Activated T-helper 1 cell treated with anti-CD3 and anti-CD28 coated beads, Interleukin-12 subunit alpha, Interleukin-12 subunit beta, Interleukin-2, Interleukin-4 antibody, amounts not matched to agents 30 ng/mL and 10 ng/mL and 1 ng/mL, durations not matched to agents 14 hours and 24 hours and 36 hours (primary cell): ENCODE measurements at regions of chr14 and their contacts with region 1.

Region 1: DNA sequence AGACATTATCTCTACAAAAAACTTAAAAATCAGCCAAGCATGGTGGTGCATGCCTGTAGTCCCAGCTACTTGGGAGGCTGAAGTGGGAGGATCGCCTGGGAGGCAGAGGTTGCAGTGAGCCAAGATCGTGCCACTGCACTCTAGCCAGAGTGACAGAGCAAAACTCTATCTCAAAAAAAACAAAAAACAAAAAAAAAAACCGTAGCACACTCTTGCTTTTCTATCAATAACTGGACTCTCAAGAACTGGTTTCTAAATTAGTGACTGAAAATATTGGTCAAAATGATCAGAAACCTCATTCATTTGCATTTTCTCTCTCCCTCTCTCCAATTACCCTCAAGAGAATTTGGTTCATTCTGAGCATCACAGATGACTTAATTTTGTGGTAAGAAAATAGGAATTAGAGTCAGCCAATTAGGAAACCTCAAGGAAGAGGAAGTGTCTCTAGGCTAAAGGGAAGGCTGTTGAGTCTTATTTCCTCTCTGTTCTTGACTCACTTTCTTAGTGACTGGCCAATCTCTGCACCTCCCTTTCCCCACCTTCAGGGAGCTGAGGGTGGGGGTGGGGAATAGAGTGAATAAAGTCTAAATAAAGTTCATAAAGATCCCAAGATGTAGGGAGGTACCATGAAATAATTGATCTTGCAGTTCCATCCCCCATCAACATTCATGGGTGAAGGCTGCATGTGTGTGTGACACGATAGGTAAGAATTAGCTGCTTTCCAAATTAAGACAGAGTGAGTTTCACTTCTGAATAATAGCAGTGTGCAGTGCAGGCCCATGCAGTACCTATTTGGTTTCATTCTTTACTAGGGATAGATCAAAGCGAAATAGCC is 6.8 kb upstream of the PSMA6 start:
- DNase-seq: peak; percentile 17
- H3K4me3 Mint-ChIP-seq: peak overlapping the region; percentile 53
- H3K27ac Mint-ChIP-seq: peak overlapping the region; percentile 99
- H3K4me1 Mint-ChIP-seq: peaks cover 51% of the 10 kb centered on the region
- H3K27me3 Mint-ChIP-seq: no peaks in the 10 kb centered on the region

Region 2: DNA sequence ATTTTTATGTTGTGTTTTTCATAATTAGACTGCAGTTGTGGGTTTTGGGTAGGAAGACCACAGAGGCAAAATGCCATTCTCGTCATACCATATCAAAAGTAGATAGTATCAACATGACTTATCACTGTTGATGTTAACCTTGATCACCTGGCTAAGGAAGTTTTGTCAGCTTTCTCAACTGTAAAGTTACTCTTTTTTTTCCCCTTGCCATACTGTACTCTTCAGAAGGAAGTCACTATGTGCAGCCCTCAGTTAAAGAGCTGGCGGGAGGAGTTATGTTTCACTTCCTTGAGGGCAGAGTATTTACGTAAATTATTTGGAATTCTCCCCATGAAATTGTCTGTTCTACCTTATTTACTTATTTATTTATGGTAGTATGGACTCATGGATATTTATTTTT is 84.3 kb before region 1 on chr14:
- intact Hi-C with region 1: loop called (anchors 1 kb)
- DNase-seq: no peak
- H3K4me3 Mint-ChIP-seq: peak overlapping the region; percentile 52
- H3K27ac Mint-ChIP-seq: peak overlapping the region; percentile 75
- H3K4me1 Mint-ChIP-seq: peaks cover 51% of the 10 kb centered on the region
- H3K27me3 Mint-ChIP-seq: no peaks in the 10 kb centered on the region

Region 3: GRCh38 chr14:35254736-35255135 is 30.6 kb before region 1 on chr14:
- intact Hi-C with region 1: loop called (anchors 1 kb)
- DNase-seq: peak; percentile 16
- H3K4me3 Mint-ChIP-seq: peak overlapping the region; percentile 51
- H3K27ac Mint-ChIP-seq: peak overlapping the region; percentile 32
- H3K4me1 Mint-ChIP-seq: peaks cover 60% of the 10 kb centered on the region
- H3K27me3 Mint-ChIP-seq: no peaks in the 10 kb centered on the region

Region 4: GRCh38 chr14:35332517-35333346 is 47.3 kb after region 1 on chr14:
- intact Hi-C with region 1: loop called (anchors 1 kb)
- DNase-seq: peak; percentile 43
- H3K4me3 Mint-ChIP-seq: peak overlapping the region; percentile 60
- H3K27ac Mint-ChIP-seq: peak overlapping the region; percentile 83
- H3K4me1 Mint-ChIP-seq: peaks cover 31% of the 10 kb centered on the region
- H3K27me3 Mint-ChIP-seq: no peaks in the 10 kb centered on the region

Region 5: GRCh38 chr14:35438910-35439713 is 153.7 kb after region 1 on chr14:
- intact Hi-C with region 1: no loop called
- DNase-seq: no peak
- H3K4me3 Mint-ChIP-seq: no peak overlapping the region
- H3K27ac Mint-ChIP-seq: no peak overlapping the region
- H3K4me1 Mint-ChIP-seq: peaks cover 7% of the 10 kb centered on the region
- H3K27me3 Mint-ChIP-seq: no peaks in the 10 kb centered on the region

Region 6: DNA sequence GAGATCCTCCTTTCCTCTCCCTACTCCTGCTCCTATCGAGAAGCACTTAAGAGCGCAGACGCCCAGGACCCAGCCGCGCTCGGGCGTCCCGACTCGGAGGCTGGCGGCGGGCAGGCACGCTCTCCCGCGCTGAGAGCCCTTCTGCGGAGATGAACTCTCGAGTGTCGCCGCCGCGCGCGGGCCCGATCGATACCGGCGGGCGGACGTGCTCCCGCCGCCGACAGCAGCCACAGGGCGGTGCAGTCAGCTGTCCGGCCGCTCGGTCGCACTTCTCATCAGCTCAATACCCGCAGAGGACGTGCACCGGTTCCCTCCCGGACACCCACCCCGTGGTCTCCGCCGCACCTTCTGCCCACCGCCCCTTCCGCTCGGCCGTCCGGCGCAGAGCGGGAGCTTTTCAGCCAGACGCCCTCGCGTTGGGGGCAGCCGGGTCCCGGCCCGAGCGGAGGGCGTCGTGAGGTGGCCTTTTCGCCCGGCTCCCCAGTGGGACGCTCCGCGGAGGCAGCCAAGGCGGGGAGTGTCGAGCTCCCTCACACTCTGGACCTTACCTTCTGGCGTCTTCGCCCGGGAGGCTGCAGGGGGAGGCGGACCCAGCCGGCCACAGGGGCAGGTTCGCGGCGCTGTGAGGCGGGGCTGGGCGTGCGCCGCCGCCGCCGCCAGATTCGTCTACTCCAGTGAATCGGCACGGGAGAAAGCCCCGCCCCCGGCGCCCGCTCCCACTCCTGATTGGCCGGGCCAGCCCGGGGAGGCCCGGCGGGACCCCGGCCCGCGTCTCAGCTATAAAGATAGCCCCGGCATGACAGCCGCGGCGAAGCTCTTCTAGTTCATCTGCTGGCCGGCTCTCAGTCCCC is 248.2 kb after region 1 on chr14 and contains the start of gene INSM2:
- intact Hi-C with region 1: loop called (anchors 5 kb)
- DNase-seq: peak; percentile 55
- H3K4me3 Mint-ChIP-seq: peak within 1 kb of the TSS; percentile 73
- H3K27ac Mint-ChIP-seq: no peak within 1 kb of the TSS
- H3K4me1 Mint-ChIP-seq: peaks cover 5% of the 10 kb centered on the region
- H3K27me3 Mint-ChIP-seq: peaks cover 55% of the 10 kb centered on the region
- total RNA-seq, gene INSM2: not detected in 2 replicates

Region 7: DNA sequence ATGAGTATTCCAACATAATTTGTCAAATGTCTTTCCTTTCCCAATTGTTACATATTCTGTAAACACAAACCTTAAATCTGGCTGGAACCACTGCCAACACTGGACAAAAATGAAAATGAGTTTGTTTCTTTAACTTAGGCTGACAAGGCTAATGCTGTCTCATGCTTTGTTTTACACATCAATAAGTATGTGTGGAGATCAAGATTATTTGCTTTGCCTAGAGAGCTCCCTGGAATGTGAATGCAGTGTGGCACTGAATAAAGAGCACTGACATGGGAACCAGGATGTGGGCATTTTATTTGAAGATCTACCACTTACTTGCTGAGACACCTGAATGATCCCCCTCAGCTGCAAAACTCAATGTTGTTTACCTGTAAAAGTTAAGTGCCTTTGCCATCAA is 462.0 kb after region 1 on chr14:
- intact Hi-C with region 1: loop called (anchors 10 kb)
- DNase-seq: no peak
- H3K4me3 Mint-ChIP-seq: no peak overlapping the region
- H3K27ac Mint-ChIP-seq: no peak overlapping the region
- H3K4me1 Mint-ChIP-seq: peaks cover 4% of the 10 kb centered on the region
- H3K27me3 Mint-ChIP-seq: no peaks in the 10 kb centered on the region

Region 8: DNA sequence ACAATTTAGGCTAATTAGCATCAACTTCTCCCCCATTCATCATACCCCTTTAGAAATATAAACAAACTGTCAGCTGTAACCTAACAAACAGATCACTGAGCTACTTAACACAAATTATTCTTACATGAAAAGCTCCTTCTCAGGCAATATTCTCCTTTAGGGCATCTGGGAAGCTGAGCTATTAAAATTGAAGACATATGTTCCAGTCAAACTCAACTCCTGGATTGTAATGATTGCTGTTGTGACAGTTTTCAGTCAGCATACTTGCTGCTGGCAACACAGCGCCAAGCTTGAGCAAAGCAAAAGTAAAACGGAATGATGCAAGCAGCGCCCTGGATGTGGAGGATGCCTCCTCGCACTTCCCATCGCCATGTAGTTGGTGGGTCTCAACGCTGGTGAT is 1804.6 kb after region 1 on chr14:
- intact Hi-C with region 1: no loop called
- DNase-seq: no peak
- H3K4me3 Mint-ChIP-seq: no peak overlapping the region
- H3K27ac Mint-ChIP-seq: no peak overlapping the region
- H3K4me1 Mint-ChIP-seq: no peaks in the 10 kb centered on the region
- H3K27me3 Mint-ChIP-seq: no peaks in the 10 kb centered on the region